H1 (cell line): ENCODE measurements at regions of chr1 and their contacts with region 1.

Region 1: DNA sequence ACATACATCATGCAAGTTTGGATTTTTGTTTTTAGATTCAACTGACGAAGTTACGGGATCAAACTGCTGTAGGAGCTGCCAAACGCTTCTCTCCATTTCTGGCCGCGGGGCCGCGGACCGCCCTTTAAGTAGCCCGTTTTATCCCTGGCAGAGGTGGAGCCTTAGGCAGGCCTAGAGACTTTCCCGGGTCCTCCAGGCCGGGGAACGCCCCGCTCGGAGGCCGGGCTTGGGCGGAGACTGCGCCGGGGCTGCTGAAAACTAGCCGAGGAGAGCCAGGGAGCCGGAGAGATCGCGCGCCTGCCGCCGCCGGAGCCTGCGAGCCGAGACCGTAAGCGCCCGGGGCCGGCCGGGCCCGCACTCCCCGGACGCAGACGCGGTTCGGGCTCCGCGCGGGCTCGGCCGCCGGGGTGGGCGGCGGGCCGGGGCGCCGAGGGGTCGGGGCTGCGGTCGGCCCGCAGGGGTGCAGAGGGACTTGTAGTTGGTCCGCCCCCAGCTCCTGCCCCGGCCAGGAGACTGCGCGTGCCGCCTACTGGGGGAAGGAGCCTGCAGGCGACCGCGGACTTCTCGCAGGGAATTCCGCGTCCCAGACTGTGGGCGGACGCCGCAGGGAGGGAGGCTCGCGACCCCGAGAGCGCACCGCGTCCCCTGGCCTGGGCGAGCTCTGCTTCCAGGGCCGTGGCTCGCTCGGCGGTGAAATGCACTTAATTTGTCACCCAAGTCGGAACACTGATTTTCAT is at the start of gene EPHX1:
- DNase-seq: peak in 1 of 2 experiments; percentile 92
- H3K4me3 ChIP-seq: peak within 1 kb of the TSS; percentile 49 to 80 (median 63)
- H3K27ac ChIP-seq: no peak within 1 kb of the TSS; the same call in 1 of the 2 replicates
- H3K4me1 ChIP-seq: peaks cover 7 to 17% (median 10%) of the 10 kb centered on the region in 4 experiments
- H3K27me3 ChIP-seq: peaks cover 0 to 4% (median 0%) of the 10 kb centered on the region in 4 experiments; a peak in 1 of 7 replicates
- CTCF ChIP-seq: peak in 2 of 3 experiments; percentile 7 to 30; a peak in 2 of 4 replicates
- EP300 ChIP-seq: no peak
- POLR2A ChIP-seq: peak; percentile 47 to 77
- RAD21 ChIP-seq: peak in 1 of 2 experiments; percentile 5; a peak in 1 of 4 replicates
- total RNA-seq, gene EPHX1: 79.1 and 80.0 TPM in 2 replicates

Region 2: GRCh38 chr1:225754940-225755641 is 54.9 kb before region 1 on chr1:
- CTCF ChIA-PET with region 1: no interaction called
- POLR2A ChIA-PET with region 1: no interaction called
- DNase-seq: no peak
- H3K4me3 ChIP-seq: no peak overlapping the region
- H3K27ac ChIP-seq: no peak overlapping the region
- H3K4me1 ChIP-seq: no peaks in the 10 kb centered on the region; a peak in 2 of 7 replicates
- H3K27me3 ChIP-seq: no peaks in the 10 kb centered on the region
- CTCF ChIP-seq: no peak
- EP300 ChIP-seq: no peak
- POLR2A ChIP-seq: no peak
- RAD21 ChIP-seq: no peak

Region 3: DNA sequence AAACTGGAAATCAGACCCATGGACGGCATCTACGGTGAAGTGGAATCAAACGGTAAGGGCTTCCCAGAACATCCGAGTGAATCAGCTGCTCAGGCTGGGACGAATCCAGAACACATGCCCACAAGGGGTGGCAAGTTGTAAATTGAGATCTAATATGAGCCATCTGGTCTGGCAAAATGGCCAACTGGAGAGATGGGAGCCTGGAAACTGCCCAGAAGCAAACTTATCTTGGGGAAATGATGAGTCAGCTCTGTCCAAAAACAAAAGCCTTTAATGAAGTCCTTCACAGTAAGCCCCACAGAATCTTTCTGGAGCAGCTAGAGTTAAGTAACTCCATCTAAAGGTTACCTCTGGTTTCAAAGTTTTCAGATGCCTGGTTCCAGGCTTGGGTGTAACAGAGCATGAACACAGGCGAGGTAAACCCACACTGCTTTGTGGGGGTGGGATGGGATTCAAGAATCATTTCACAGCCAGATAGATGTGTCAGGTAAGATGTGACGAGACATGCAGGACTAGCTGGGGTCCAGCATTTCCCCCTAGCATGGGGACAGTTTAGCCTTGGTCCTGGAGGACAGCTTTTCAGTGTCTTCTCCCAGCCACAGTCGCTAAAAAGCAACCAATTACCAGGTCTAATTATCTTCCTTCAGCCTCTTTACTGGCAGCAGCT is 42.9 kb before region 1 on chr1:
- CTCF ChIA-PET with region 1: interaction called, 12 read pairs
- POLR2A ChIA-PET with region 1: interaction called, 4 read pairs
- DNase-seq: no peak
- H3K4me3 ChIP-seq: no peak overlapping the region
- H3K27ac ChIP-seq: no peak overlapping the region
- H3K4me1 ChIP-seq: peaks cover 0 to 16% (median 14%) of the 10 kb centered on the region in 4 experiments; a peak in 6 of 7 replicates
- H3K27me3 ChIP-seq: no peaks in the 10 kb centered on the region; a peak in 1 of 7 replicates
- CTCF ChIP-seq: no peak
- EP300 ChIP-seq: no peak
- POLR2A ChIP-seq: no peak
- RAD21 ChIP-seq: no peak

Region 4: DNA sequence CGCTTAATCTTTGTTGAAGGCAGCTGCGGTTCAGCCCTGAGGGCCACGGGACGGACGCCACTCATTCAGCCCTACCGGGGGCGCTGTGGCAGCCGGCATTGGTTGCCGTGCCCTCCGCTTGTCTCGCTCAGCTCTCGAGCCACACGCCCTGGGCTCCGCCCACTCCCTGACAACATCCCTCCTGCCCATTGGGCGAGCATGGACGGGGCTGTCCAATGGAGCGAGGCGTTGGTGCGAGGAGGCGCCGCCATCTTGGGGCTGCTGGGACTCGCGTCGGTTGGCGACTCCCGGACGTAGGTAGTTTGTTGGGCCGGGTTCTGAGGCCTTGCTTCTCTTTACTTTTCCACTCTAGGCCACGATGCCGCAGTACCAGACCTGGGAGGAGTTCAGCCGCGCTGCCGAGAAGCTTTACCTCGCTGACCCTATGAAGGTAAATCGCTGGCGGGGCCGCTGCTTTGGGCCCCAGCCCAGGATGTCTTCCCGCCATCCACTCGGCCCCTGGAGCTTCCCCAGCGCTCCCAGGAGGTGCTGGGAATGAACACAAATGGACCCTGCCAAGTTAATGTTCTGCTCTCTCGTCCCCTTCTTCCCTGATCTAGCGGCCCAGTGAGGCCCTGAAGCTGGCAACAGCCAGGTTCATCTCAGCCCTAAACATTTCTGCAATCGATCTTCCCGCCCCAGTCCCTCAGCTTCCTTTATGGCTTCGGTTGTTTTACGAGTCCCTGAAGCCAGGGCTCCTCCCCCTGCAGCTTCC is 32.2 kb before region 1 on chr1 and contains the start of gene SRP9:
- CTCF ChIA-PET with region 1: interaction called, 50 read pairs
- POLR2A ChIA-PET with region 1: interaction called, 166 read pairs
- DNase-seq: peak; percentile 98 to 99
- H3K4me3 ChIP-seq: peak within 1 kb of the TSS; percentile 92 to 99 (median 96)
- H3K27ac ChIP-seq: peak within 1 kb of the TSS; percentile 99
- H3K4me1 ChIP-seq: peaks cover 1 to 5% (median 4%) of the 10 kb centered on the region in 4 experiments; a peak in 6 of 7 replicates
- H3K27me3 ChIP-seq: no peaks in the 10 kb centered on the region
- CTCF ChIP-seq: peak; percentile 78 to 96 (median 92)
- EP300 ChIP-seq: no peak
- POLR2A ChIP-seq: peak; percentile 89 to 95
- RAD21 ChIP-seq: peak; percentile 69 to 72
- total RNA-seq, gene SRP9: 446 and 448 TPM in 2 replicates

Region 5: GRCh38 chr1:225825607-225826007 is 15.6 kb after region 1 on chr1:
- CTCF ChIA-PET with region 1: interaction called, 46 read pairs
- POLR2A ChIA-PET with region 1: interaction called, 9 read pairs
- DNase-seq: no peak
- H3K4me3 ChIP-seq: no peak overlapping the region
- H3K27ac ChIP-seq: no peak overlapping the region
- H3K4me1 ChIP-seq: peaks cover 6 to 17% (median 11%) of the 10 kb centered on the region in 4 experiments; a peak in 6 of 7 replicates
- H3K27me3 ChIP-seq: no peaks in the 10 kb centered on the region
- CTCF ChIP-seq: no peak
- EP300 ChIP-seq: no peak
- POLR2A ChIP-seq: no peak
- RAD21 ChIP-seq: no peak

Region 6: DNA sequence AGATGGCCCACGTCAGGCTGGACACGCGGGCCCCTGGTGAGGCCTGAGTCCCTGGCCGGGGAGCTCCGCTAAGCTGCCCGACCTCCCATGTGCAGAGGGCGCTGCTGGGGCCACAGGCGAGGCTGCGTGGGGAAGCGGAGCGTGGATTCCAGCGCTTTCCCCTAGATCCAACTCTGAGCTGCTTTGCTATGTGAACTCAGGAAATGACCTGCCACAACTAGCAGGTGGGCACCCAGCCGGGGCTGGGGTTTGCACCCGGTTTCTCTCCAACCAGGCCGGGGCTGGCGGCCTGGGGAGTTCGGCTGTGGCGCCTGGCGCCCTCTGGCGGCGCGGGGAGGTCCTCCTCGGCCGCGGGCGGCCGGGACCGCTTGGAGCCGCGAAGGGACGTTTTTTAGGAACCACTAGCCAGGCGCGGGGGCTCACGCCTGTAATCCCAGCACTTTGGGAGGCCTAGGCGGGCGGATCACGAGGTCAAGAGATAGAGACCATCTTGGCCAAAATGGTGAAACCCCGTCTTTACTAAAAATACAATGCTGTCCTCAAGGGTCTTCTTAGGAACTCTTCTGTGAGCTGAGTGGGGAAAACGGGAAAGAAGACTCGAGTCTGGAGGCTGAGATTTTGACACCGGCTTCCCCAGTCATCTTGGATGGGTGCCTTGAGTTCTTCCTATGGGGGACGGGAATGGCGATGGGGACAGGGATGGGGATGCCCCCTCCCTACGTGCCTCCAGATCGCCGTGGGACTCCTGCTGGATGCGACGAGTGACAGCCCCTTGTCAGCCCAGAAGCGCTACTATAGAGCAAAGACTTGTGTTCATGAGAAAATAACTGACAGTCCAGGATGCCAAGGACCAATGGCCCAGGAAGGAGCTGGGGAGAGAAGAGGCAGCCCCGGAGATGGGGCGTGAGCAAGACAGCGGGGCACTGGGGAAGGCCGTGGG is 101.5 kb after region 1 on chr1:
- CTCF ChIA-PET with region 1: interaction called, 13 read pairs
- POLR2A ChIA-PET with region 1: no interaction called
- DNase-seq: peak in 1 of 2 experiments; percentile 94
- H3K4me3 ChIP-seq: no peak overlapping the region
- H3K27ac ChIP-seq: no peak overlapping the region
- H3K4me1 ChIP-seq: peaks cover 0 to 7% (median 1%) of the 10 kb centered on the region in 4 experiments; a peak in 2 of 7 replicates
- H3K27me3 ChIP-seq: no peaks in the 10 kb centered on the region; a peak in 2 of 7 replicates
- CTCF ChIP-seq: peak; percentile 75 to 97 (median 77)
- EP300 ChIP-seq: no peak
- POLR2A ChIP-seq: no peak
- RAD21 ChIP-seq: peak; percentile 86 to 92